Activated CD4-positive, alpha-beta memory T cell treated with anti-CD3 and anti-CD28 coated beads for 36 hours (primary cell): ENCODE measurements at regions of chr13 and their contacts with region 1.

Region 1: DNA sequence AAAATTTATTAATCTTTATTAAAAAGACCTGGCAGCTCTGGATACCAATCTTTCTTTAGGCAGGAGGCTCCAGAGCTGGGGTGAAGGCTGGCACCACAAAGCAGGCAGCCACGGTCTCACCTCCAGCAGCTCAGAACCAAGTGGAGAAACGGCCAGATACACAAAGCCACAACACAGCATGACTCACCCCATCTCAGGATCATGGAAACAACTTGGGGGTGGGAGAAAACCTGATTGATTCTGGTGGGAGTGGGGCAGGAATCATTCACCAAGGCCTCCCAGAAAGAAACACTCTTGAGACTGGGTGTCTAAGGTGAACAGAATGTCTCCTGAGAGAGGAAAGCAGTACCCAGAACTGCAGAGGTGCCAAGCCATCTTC is 64.2 kb downstream of the CRYL1 start:
- DNase-seq: peak; percentile 65
- H3K4me3 Mint-ChIP-seq: no peak overlapping the region
- H3K27ac Mint-ChIP-seq: peak overlapping the region; percentile 61
- H3K4me1 Mint-ChIP-seq: peaks cover 31% of the 10 kb centered on the region
- H3K27me3 Mint-ChIP-seq: no peaks in the 10 kb centered on the region

Region 2: GRCh38 chr13:20019043-20019442 is 442.4 kb before region 1 on chr13:
- CTCF ChIA-PET with region 1: no interaction called
- POLR2A ChIA-PET with region 1: no interaction called
- intact Hi-C with region 1: no loop called
- DNase-seq: no peak
- H3K4me3 Mint-ChIP-seq: no peak overlapping the region
- H3K27ac Mint-ChIP-seq: no peak overlapping the region
- H3K4me1 Mint-ChIP-seq: peaks cover 35% of the 10 kb centered on the region
- H3K27me3 Mint-ChIP-seq: no peaks in the 10 kb centered on the region

Region 3: GRCh38 chr13:20425819-20426219 is 35.7 kb before region 1 on chr13:
- CTCF ChIA-PET with region 1: interaction called, 4 read pairs
- POLR2A ChIA-PET with region 1: no interaction called
- intact Hi-C with region 1: loop called (anchors 5 kb)
- DNase-seq: peak; percentile 47
- H3K4me3 Mint-ChIP-seq: no peak overlapping the region
- H3K27ac Mint-ChIP-seq: no peak overlapping the region
- H3K4me1 Mint-ChIP-seq: peaks cover 58% of the 10 kb centered on the region
- H3K27me3 Mint-ChIP-seq: no peaks in the 10 kb centered on the region

Region 4: GRCh38 chr13:20519875-20520274 is 58.4 kb after region 1 on chr13:
- CTCF ChIA-PET with region 1: no interaction called
- POLR2A ChIA-PET with region 1: no interaction called
- intact Hi-C with region 1: loop called (anchors 2 kb)
- DNase-seq: no peak
- H3K4me3 Mint-ChIP-seq: no peak overlapping the region
- H3K27ac Mint-ChIP-seq: no peak overlapping the region
- H3K4me1 Mint-ChIP-seq: peaks cover 16% of the 10 kb centered on the region
- H3K27me3 Mint-ChIP-seq: no peaks in the 10 kb centered on the region

Region 5: DNA sequence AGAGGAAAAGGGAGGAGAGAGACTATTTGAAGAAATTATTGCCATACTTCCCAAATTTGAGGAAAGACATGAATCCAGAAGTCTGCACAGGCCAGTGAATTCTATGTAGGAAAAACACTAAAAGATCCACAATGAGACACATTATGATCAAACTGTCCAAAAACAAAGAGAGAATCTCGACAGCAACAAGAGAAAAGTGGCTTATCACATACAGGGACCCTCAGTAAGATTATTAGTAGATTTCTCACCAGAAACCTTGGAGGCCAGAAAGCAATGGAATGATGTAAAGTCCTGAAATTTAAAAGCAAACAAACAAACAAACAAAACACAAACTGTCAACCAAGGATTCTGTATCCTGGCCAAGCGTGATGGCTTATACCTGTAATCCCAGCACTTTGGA is 186.3 kb after region 1 on chr13:
- CTCF ChIA-PET with region 1: no interaction called
- POLR2A ChIA-PET with region 1: no interaction called
- intact Hi-C with region 1: no loop called
- DNase-seq: no peak
- H3K4me3 Mint-ChIP-seq: no peak overlapping the region
- H3K27ac Mint-ChIP-seq: no peak overlapping the region
- H3K4me1 Mint-ChIP-seq: no peaks in the 10 kb centered on the region
- H3K27me3 Mint-ChIP-seq: no peaks in the 10 kb centered on the region